Heart right ventricle (tissue), 16 donors: ENCODE measurements at regions of chr11 and their contacts with region 1.

Region 1: DNA sequence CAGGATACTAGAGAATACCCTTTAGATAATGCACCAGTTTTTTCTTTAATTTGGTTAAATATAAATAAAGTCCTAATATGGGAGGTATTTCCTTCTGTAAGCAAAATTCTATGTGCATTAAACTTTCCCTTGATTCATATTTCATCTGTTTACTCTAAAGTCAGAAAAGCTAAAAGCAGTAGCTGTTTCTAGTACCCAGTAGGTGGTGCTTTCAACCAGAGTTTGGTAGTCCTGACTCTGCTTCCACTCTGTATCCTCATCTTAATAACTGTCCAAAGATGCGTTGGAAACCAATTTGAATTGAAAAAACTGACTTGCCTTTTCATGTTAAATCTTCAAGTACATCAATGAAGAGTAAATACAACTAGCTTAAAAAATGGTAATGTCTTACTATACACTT is 1065.2 kb downstream of the JRKL start:
- DNase-seq: no peak
- ATAC-seq: no peak
- H3K4me3 ChIP-seq: no peak overlapping the region
- H3K27ac ChIP-seq: no peak overlapping the region
- H3K4me1 ChIP-seq: no peaks in the 10 kb centered on the region
- H3K27me3 ChIP-seq: no peaks in the 10 kb centered on the region
- CTCF ChIP-seq: peak in 7 of 9 donors; percentile 31 to 58 (median 41)

Region 2: GRCh38 chr11:99015634-99016454 is 1560.9 kb after region 1 on chr11:
- intact Hi-C with region 1: loop called in 4 of 10 experiments (anchors 10 kb)
- DNase-seq: no peak
- ATAC-seq: peak in 1 of 8 donors; percentile 31
- H3K4me3 ChIP-seq: no peak overlapping the region
- H3K27ac ChIP-seq: no peak overlapping the region
- H3K4me1 ChIP-seq: peaks cover 0 to 7% (median 0%) of the 10 kb centered on the region in 9 donors
- H3K27me3 ChIP-seq: peaks cover 0 to 28% (median 17%) of the 10 kb centered on the region in 7 donors
- CTCF ChIP-seq: peak; percentile 70 to 95 (median 87)